CD8-positive, alpha-beta memory T cell (primary cell): ENCODE measurements at regions of chr17 and their contacts with region 1.

Region 1: GRCh38 chr17:35432176-35433074 is at the start of gene SLFN12:
- DNase-seq: peak; percentile 20 to 73 (median 68)
- H3K4me3 ChIP-seq: peak within 1 kb of the TSS; percentile 87
- H3K4me3 Mint-ChIP-seq: peak within 1 kb of the TSS; percentile 93 to 100 (median 96)
- H3K27ac ChIP-seq: peak within 1 kb of the TSS; percentile 44
- H3K27ac Mint-ChIP-seq: peak within 1 kb of the TSS; percentile 87 to 100 (median 95)
- H3K4me1 ChIP-seq: peaks cover 37% of the 10 kb centered on the region
- H3K4me1 Mint-ChIP-seq: peaks cover 48 to 62% (median 60%) of the 10 kb centered on the region in 3 donors
- H3K27me3 ChIP-seq: no peaks in the 10 kb centered on the region
- H3K27me3 Mint-ChIP-seq: peaks cover 0 to 2% of the 10 kb centered on the region in 2 donors
- total RNA-seq, gene SLFN12: 7.4 to 7.9 TPM

Region 2: DNA sequence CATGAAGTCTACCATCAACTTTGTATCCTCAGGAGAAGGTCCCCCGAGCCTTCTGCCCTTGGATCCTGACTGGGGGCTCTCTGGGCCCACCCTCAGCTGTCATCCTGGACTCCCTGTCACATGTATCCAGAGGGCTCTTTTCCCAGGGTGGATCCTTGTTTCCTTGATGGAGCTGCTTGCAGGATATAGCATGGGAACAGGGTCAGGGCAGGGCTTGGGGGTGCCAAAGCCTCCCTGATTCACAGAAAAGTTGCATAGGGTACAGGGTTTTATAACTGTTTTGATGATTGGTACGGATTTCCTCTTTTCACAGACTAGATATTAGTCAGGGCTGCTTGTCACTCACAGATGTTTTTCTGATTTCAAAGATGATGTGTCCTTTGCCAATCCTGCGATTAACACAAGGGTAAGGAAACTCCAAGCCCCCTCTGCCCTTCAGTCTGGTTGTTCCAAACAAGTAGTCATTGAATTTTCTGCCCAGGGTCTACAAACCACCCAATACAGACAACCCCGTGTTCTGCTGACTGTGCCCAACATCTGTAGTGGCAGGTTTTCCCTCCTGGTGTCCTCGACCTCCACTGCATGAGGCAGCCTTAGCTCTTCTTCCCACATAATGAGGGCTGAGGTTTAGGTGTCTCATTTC is 217.7 kb before region 1 on chr17:
- CTCF ChIA-PET with region 1: no interaction called
- POLR2A ChIA-PET with region 1: no interaction called
- DNase-seq: peak in 1 of 5 donors; percentile 6
- H3K4me3 ChIP-seq: peak overlapping the region; percentile 61
- H3K4me3 Mint-ChIP-seq: peak overlapping the region; percentile 15 to 87 (median 81)
- H3K27ac ChIP-seq: peak overlapping the region; percentile 40
- H3K27ac Mint-ChIP-seq: peak overlapping the region; percentile 41 to 99 (median 94)
- H3K4me1 ChIP-seq: peaks cover 93% of the 10 kb centered on the region
- H3K4me1 Mint-ChIP-seq: peaks cover 79 to 95% (median 92%) of the 10 kb centered on the region in 3 donors
- H3K27me3 ChIP-seq: no peaks in the 10 kb centered on the region
- H3K27me3 Mint-ChIP-seq: no peaks in the 10 kb centered on the region

Region 3: GRCh38 chr17:35486920-35487732 is 54.7 kb after region 1 on chr17:
- CTCF ChIA-PET with region 1: interaction called, 9 read pairs
- POLR2A ChIA-PET with region 1: interaction called, 15 read pairs
- DNase-seq: peak; percentile 55 to 84 (median 71)
- H3K4me3 ChIP-seq: peak overlapping the region; percentile 92
- H3K4me3 Mint-ChIP-seq: peak overlapping the region; percentile 84 to 100 (median 98)
- H3K27ac ChIP-seq: peak overlapping the region; percentile 85
- H3K27ac Mint-ChIP-seq: peak overlapping the region; percentile 87 to 100 (median 96)
- H3K4me1 ChIP-seq: peaks cover 31% of the 10 kb centered on the region
- H3K4me1 Mint-ChIP-seq: peaks cover 81 to 92% (median 88%) of the 10 kb centered on the region in 3 donors
- H3K27me3 ChIP-seq: no peaks in the 10 kb centered on the region
- H3K27me3 Mint-ChIP-seq: no peaks in the 10 kb centered on the region

Region 4: GRCh38 chr17:36133602-36134236 is 701.3 kb after region 1 on chr17:
- CTCF ChIA-PET with region 1: no interaction called
- POLR2A ChIA-PET with region 1: no interaction called
- DNase-seq: no peak
- H3K4me3 ChIP-seq: no peak overlapping the region
- H3K4me3 Mint-ChIP-seq: no peak overlapping the region
- H3K27ac ChIP-seq: no peak overlapping the region
- H3K27ac Mint-ChIP-seq: peak overlapping the region in 1 of 8 donors; percentile 25
- H3K4me1 ChIP-seq: no peaks in the 10 kb centered on the region
- H3K4me1 Mint-ChIP-seq: peaks cover 3 to 14% (median 12%) of the 10 kb centered on the region in 3 donors
- H3K27me3 ChIP-seq: no peaks in the 10 kb centered on the region
- H3K27me3 Mint-ChIP-seq: peaks cover 0 to 10% of the 10 kb centered on the region in 2 donors